ENCODE measurements at regions of chr15 and their contacts with region 1.

Region 1: GRCh38 chr15:63233667-63234423 is 43.6 kb upstream of the APH1B start:
- DNase-seq: peak; percentile 87
- ATAC-seq: peak; percentile 61
- H3K4me3 ChIP-seq: no peak overlapping the region
- H3K27ac ChIP-seq: peak overlapping the region; percentile 82
- H3K4me1 ChIP-seq: peaks cover 20% of the 10 kb centered on the region
- H3K27me3 ChIP-seq: no peaks in the 10 kb centered on the region
- CTCF ChIP-seq: no peak
- POLR2A ChIP-seq: no peak
- RAD21 ChIP-seq: no peak

Region 2: DNA sequence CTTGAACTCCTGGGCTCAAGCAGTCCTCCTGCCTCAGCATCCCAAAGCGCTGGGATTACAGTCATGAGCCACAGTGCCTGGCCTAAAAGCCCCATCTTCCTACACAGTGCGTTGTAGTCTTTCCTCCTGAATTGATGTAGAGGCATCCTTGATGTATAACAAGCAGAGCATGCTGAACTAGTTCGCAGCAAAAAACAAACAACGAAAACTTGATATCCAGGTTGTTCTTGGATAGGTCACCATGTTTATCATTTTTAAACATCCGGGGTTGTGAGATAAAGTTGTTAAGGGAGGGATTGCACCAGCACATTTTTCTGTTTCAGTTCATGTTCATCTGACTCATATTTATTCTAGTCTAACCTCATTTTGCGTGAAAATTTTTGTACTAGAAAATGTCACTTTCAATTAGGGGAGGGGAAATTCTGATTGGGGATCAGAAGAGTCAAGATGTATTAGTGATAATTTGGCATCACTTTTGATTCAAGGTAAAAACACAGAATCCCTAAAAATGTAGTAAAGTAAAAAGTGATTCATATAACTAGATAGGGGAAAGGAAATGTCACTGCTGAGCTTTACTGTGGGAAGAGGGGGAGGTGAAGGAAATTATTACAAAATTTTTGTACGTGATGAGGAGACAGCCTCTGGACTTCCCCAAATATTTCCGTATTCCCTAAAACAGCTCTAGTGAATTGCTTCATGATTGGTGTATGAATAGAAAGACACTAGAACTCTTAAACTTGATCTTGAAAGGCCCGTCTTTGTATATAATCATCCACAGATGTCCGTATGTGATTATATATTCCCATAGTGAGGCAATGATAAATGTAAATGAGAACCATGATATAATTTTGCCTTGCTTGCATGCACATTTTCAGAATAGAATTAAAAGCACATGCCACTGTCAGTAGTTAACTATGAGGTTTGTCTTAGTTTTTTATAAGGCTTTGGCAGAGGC is 21.5 kb before region 1 on chr15:
- CTCF ChIA-PET with region 1: interaction called, 3 read pairs
- POLR2A ChIA-PET with region 1: interaction called, 4 read pairs
- dilution Hi-C with region 1: no loop called
- in situ Hi-C with region 1: no loop called
- intact Hi-C with region 1: loop called (anchors 2 kb)
- DNase-seq: peak; percentile 87
- ATAC-seq: peak; percentile 68
- H3K4me3 ChIP-seq: no peak overlapping the region
- H3K27ac ChIP-seq: peak overlapping the region; percentile 87
- H3K4me1 ChIP-seq: peaks cover 14% of the 10 kb centered on the region
- H3K27me3 ChIP-seq: no peaks in the 10 kb centered on the region
- CTCF ChIP-seq: no peak
- POLR2A ChIP-seq: no peak
- RAD21 ChIP-seq: no peak